ENCODE measurements at regions of chr1 and their contacts with region 1.

Region 1: DNA sequence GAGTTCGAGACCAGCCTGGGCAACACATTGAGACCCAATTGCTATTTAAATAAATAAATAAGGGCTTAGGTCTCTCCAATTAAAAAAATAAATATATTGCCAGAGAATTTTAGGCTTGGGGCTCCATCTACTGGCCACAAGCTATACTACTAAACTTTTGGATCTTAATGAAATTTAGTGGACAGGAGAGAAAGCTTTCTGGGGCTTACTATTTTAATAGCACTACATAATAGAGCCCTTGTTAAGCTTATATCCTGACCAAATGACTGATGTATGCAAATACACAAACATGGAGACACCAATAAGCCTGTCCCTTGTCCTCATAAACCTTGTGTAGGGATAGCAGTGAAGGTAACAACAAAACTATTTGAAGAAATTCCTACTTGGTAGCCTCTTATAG is 18.4 kb downstream of the CCT3 start:
- DNase-seq: peak in 3 of 9 donors; percentile 16 to 25 (median 23)
- ATAC-seq: no peak
- H3K4me3 ChIP-seq: no peak overlapping the region
- H3K4me3 Mint-ChIP-seq: no peak overlapping the region
- H3K27ac ChIP-seq: no peak overlapping the region
- H3K27ac Mint-ChIP-seq: no peak overlapping the region
- H3K4me1 ChIP-seq: no peaks in the 10 kb centered on the region
- H3K4me1 Mint-ChIP-seq: peaks cover 0 to 1% (median 0%) of the 10 kb centered on the region in 7 donors
- H3K27me3 ChIP-seq: no peaks in the 10 kb centered on the region
- H3K27me3 Mint-ChIP-seq: no peaks in the 10 kb centered on the region

Region 2: DNA sequence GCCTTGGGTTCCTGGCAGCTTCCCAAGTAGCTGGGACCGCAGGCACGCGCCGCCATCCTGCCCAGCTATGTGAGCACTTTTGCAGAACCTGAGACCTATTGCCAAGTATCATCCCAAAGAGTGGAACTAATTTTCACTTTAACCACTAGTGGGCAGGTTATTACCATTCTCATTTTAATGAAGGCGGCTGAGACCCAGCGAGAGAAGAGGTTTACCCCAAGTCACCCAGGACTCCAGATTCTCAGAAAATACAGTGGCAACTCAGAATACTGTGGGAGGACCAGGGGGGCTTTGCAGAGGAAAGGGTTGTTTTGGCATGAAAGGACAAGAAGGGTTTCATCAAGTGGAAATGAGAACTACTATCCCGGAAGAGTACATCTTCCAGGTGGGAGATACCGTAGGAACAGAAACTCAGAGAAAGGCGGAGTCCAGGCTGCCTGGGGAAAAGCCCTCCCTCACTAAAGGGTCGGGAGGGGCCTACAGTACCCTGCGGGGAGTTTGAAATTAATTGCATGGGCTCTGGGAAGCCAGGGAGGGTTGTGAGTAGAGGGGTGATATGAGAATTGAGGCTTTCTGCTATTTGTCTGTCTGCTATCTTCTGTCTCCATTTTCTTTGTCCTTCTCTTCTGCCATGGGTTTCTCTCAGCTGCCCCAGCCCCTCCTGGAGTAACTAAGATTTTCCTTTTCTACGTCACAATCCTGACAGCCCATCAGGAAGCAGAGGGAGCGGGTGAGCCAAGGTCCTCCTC is 173.5 kb before region 1 on chr1:
- CTCF ChIA-PET with region 1: interaction called, 3 read pairs
- POLR2A ChIA-PET with region 1: interaction called, 5 read pairs
- intact Hi-C with region 1: loop called in 1 of 2 experiments (anchors 1 kb)
- DNase-seq: peak in 7 of 9 donors; percentile 54 to 78 (median 71)
- ATAC-seq: peak; percentile 63
- H3K4me3 ChIP-seq: no peak overlapping the region
- H3K4me3 Mint-ChIP-seq: peak overlapping the region; percentile 34 to 79 (median 63)
- H3K27ac ChIP-seq: no peak overlapping the region
- H3K27ac Mint-ChIP-seq: peak overlapping the region in 7 of 9 donors; percentile 9 to 84 (median 63)
- H3K4me1 ChIP-seq: peaks cover 0 to 6% of the 10 kb centered on the region in 2 donors
- H3K4me1 Mint-ChIP-seq: peaks cover 6 to 28% (median 15%) of the 10 kb centered on the region in 7 donors
- H3K27me3 ChIP-seq: no peaks in the 10 kb centered on the region
- H3K27me3 Mint-ChIP-seq: peaks cover 0 to 8% (median 0%) of the 10 kb centered on the region in 5 donors

Measured in naive thymus-derived CD4-positive, alpha-beta T cell (primary cell).